CD8-positive, alpha-beta T cell (primary cell): ENCODE measurements at regions of chr3 and their contacts with region 1.

Region 1: GRCh38 chr3:155870133-155870944 is at the start of gene GMPS:
- DNase-seq: peak; percentile 90 to 97 (median 95)
- ATAC-seq: peak; percentile 93
- H3K4me3 ChIP-seq: peak within 1 kb of the TSS; percentile 75 to 80
- H3K4me3 Mint-ChIP-seq: peak within 1 kb of the TSS; percentile 95
- H3K27ac ChIP-seq: peak within 1 kb of the TSS; percentile 72 to 93
- H3K27ac Mint-ChIP-seq: peak within 1 kb of the TSS; percentile 95
- H3K4me1 ChIP-seq: peaks cover 24% of the 10 kb centered on the region
- H3K4me1 Mint-ChIP-seq: peaks cover 33% of the 10 kb centered on the region
- H3K27me3 ChIP-seq: no peaks in the 10 kb centered on the region
- H3K27me3 Mint-ChIP-seq: no peaks in the 10 kb centered on the region
- CTCF ChIP-seq: peak; percentile 32
- total RNA-seq, gene GMPS: 29.6 to 31.7 TPM

Region 2: DNA sequence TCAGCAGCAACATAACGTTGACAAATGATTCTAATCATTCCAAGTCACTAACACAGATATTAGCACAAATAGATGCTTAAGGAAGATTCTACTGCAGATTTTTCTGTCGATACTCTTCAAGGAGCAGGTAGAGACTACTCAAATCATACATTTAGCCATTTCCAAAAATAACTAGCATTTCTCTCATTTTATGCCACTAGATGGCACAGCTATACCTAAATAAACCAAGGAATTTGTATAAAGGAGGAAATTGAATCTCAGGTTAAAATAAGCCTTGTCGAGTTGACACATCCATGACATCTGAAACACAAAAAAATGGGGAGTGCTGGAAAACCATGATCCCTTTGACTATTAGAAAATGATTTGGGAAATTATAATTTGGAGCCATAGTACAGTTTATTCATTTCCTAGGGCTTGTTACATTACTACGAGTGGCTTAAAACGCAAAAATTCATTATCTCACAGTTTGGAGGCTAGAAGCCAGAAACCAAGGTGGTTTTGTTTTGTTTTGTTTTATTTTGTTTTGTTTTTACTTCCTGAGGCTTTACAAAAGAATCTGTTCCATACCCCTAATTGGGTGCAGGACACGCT is 517.3 kb before region 1 on chr3:
- CTCF ChIA-PET with region 1: no interaction called
- POLR2A ChIA-PET with region 1: no interaction called
- intact Hi-C with region 1: loop called in 1 of 2 experiments (anchors 5 kb)
- DNase-seq: peak in 2 of 9 experiments; percentile 8 to 35
- ATAC-seq: no peak
- H3K4me3 ChIP-seq: no peak overlapping the region
- H3K4me3 Mint-ChIP-seq: no peak overlapping the region
- H3K27ac ChIP-seq: no peak overlapping the region
- H3K27ac Mint-ChIP-seq: no peak overlapping the region
- H3K4me1 ChIP-seq: no peaks in the 10 kb centered on the region
- H3K4me1 Mint-ChIP-seq: no peaks in the 10 kb centered on the region
- H3K27me3 ChIP-seq: no peaks in the 10 kb centered on the region
- H3K27me3 Mint-ChIP-seq: no peaks in the 10 kb centered on the region
- CTCF ChIP-seq: peak; percentile 34

Region 3: GRCh38 chr3:155753036-155753639 is 117.2 kb before region 1 on chr3:
- CTCF ChIA-PET with region 1: interaction called, 3 read pairs
- POLR2A ChIA-PET with region 1: no interaction called
- intact Hi-C with region 1: loop called (anchors 5 kb)
- DNase-seq: peak in 2 of 9 experiments; percentile 25 to 39
- ATAC-seq: no peak
- H3K4me3 ChIP-seq: no peak overlapping the region
- H3K4me3 Mint-ChIP-seq: no peak overlapping the region
- H3K27ac ChIP-seq: no peak overlapping the region
- H3K27ac Mint-ChIP-seq: no peak overlapping the region
- H3K4me1 ChIP-seq: no peaks in the 10 kb centered on the region
- H3K4me1 Mint-ChIP-seq: no peaks in the 10 kb centered on the region
- H3K27me3 ChIP-seq: no peaks in the 10 kb centered on the region
- H3K27me3 Mint-ChIP-seq: no peaks in the 10 kb centered on the region
- CTCF ChIP-seq: peak; percentile 22

Region 4: GRCh38 chr3:155854141-155854940 is 16.0 kb before region 1 on chr3 and contains the start of gene SLC33A1:
- CTCF ChIA-PET with region 1: interaction called, 5 read pairs
- POLR2A ChIA-PET with region 1: interaction called, 28 read pairs
- intact Hi-C with region 1: loop called (anchors 1 kb)
- DNase-seq: peak; percentile 96 to 100 (median 99)
- ATAC-seq: peak; percentile 89
- H3K4me3 ChIP-seq: peak within 1 kb of the TSS; percentile 85 to 92
- H3K4me3 Mint-ChIP-seq: peak within 1 kb of the TSS; percentile 98
- H3K27ac ChIP-seq: peak within 1 kb of the TSS; percentile 90 to 95
- H3K27ac Mint-ChIP-seq: peak within 1 kb of the TSS; percentile 99
- H3K4me1 ChIP-seq: peaks cover 33% of the 10 kb centered on the region
- H3K4me1 Mint-ChIP-seq: peaks cover 39% of the 10 kb centered on the region
- H3K27me3 ChIP-seq: no peaks in the 10 kb centered on the region
- H3K27me3 Mint-ChIP-seq: no peaks in the 10 kb centered on the region
- CTCF ChIP-seq: no peak
- total RNA-seq, gene SLC33A1: 12.6 to 12.9 TPM

Region 5: GRCh38 chr3:157088601-157089454 is 1218.5 kb after region 1 on chr3:
- CTCF ChIA-PET with region 1: no interaction called
- POLR2A ChIA-PET with region 1: no interaction called
- intact Hi-C with region 1: loop called (anchors 5 to 10 kb)
- DNase-seq: peak; percentile 87 to 97 (median 93)
- ATAC-seq: peak; percentile 92
- H3K4me3 ChIP-seq: peak overlapping the region; percentile 96 to 98
- H3K4me3 Mint-ChIP-seq: peak overlapping the region; percentile 88
- H3K27ac ChIP-seq: peak overlapping the region; percentile 88 to 95
- H3K27ac Mint-ChIP-seq: peak overlapping the region; percentile 96
- H3K4me1 ChIP-seq: peaks cover 18% of the 10 kb centered on the region
- H3K4me1 Mint-ChIP-seq: peaks cover 26% of the 10 kb centered on the region
- H3K27me3 ChIP-seq: no peaks in the 10 kb centered on the region
- H3K27me3 Mint-ChIP-seq: no peaks in the 10 kb centered on the region
- CTCF ChIP-seq: no peak

Region 6: DNA sequence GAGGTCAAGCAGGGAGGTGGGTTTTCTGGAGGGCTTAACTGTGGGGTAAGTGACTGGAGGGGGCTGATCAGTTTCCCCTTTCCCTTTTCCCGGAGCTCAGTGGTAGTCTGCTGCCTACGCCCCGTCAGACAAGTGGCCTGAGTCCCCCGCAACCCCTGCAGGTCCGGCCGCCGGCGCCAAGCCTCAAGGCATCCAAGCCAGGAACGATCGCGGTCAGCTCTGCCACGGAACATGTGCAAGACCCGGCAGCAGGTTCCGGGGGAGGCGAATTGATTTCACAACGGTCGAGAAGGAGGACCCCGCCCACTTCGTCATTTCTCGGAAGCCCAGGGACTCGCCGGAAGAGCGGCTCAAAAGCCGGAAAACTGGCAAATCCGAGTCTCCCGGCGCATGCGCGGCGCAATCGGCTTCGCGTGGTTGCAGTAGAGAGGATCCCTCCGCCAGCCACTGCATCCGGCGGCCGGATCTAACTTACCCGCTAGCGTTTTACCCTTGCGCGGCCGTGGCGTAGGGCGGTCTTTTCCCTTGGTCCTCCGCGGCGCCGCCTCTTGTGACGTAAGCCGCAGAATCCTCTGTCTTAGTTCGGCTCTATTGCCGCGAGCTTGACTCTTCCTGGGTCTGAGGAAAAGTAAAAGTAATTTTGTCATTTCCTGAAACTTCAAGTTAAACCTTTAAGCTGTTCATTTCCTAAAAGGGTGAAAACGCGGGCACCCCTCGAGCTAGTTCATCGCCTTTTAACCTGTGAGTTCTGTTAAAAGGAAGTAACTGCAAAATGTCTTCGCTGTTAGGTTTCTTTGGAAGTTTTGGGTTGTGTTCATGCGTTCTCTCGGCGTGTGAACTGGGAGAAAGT is 1304.5 kb after region 1 on chr3:
- CTCF ChIA-PET with region 1: no interaction called
- POLR2A ChIA-PET with region 1: interaction called, 4 read pairs
- intact Hi-C with region 1: loop called (anchors 1 to 5 kb)
- DNase-seq: peak; percentile 94 to 100 (median 98)
- ATAC-seq: peak; percentile 91
- H3K4me3 ChIP-seq: peak overlapping the region; percentile 73 to 89
- H3K4me3 Mint-ChIP-seq: peak overlapping the region; percentile 92
- H3K27ac ChIP-seq: peak overlapping the region; percentile 96 to 98
- H3K27ac Mint-ChIP-seq: peak overlapping the region; percentile 99
- H3K4me1 ChIP-seq: peaks cover 25% of the 10 kb centered on the region
- H3K4me1 Mint-ChIP-seq: peaks cover 30% of the 10 kb centered on the region
- H3K27me3 ChIP-seq: no peaks in the 10 kb centered on the region
- H3K27me3 Mint-ChIP-seq: no peaks in the 10 kb centered on the region
- CTCF ChIP-seq: no peak